Activated CD8-positive, alpha-beta T cell treated with anti-CD3 and anti-CD28 coated beads, Interleukin-2, amount 10 ng/mL, durations not matched to agents 7 days and 5 days (primary cell): ENCODE measurements at regions of chr9 and their contacts with region 1.

Region 1: DNA sequence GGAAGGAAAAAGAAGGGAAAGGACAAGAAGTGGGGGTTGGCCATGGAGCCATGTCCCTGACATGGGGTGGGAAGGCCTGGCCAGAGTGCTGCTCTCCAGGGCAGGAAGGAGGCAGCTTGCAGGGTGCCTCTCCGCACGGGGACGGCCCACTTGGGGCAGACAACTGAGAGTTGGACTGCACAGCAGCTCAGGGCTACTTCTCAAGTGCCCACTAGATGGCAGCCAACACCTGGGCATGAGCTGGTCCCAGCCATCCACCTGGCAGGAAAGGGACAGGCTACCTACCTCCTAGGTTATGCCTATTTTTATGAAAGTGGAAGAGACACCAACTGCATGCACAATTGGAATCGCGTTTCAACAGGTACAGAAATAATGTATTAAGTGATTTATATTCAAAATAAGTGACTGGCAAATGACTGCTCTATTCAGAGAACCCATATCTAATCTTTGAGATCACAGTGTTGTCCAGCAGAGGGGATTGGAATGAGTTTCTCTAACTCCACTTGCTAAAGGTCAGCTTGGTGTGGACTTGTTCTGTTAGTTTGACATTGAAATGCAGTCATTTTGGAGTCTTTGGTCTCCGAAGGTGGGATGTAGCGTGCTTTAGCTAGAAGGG is 113.4 kb downstream of the SYK start:
- DNase-seq: peak; percentile 83
- ATAC-seq: peak; percentile 99
- H3K4me3 Mint-ChIP-seq: no peak overlapping the region
- H3K27ac Mint-ChIP-seq: no peak overlapping the region
- H3K4me1 Mint-ChIP-seq: peaks cover 4% of the 10 kb centered on the region
- H3K27me3 Mint-ChIP-seq: no peaks in the 10 kb centered on the region

Region 2: DNA sequence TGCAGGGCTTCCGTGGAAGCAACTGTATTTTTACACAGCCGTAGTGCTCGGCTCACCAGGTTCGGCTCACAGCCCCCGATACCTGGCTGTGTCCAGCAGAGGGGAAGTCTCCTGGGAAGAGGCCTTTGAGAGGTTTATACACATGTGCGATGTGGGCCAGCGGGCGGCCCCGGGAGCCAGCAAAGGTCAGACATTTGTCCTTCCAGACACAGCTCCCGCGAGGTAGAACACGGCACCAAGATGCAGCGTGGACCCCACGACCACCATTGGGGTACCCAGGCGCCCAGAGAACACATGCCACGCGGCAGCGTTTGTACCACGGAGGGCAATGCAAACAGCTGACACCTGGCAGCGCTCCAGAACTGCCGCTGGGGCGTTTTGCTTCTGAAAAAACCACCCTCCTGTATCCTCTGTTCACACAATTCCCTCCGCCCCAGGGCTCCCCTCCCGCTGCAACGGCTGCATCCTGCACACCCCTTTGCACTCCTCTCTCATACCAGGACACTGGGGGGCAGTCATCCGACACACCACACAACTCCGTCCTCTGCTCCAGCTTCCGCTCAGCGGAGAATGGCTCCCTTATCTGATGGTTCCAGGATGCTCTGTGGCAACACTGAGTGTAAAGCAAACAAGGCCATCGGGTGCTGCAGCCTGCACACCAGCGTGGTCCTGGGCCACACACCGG is 122.0 kb after region 1 on chr9:
- CTCF ChIA-PET with region 1: interaction called, 10 read pairs
- POLR2A ChIA-PET with region 1: no interaction called
- DNase-seq: peak; percentile 87
- ATAC-seq: peak; percentile 96
- H3K4me3 Mint-ChIP-seq: peak overlapping the region; percentile 33
- H3K27ac Mint-ChIP-seq: peak overlapping the region; percentile 74
- H3K4me1 Mint-ChIP-seq: peaks cover 69% of the 10 kb centered on the region
- H3K27me3 Mint-ChIP-seq: peaks cover under 1% of the 10 kb centered on the region

Region 3: DNA sequence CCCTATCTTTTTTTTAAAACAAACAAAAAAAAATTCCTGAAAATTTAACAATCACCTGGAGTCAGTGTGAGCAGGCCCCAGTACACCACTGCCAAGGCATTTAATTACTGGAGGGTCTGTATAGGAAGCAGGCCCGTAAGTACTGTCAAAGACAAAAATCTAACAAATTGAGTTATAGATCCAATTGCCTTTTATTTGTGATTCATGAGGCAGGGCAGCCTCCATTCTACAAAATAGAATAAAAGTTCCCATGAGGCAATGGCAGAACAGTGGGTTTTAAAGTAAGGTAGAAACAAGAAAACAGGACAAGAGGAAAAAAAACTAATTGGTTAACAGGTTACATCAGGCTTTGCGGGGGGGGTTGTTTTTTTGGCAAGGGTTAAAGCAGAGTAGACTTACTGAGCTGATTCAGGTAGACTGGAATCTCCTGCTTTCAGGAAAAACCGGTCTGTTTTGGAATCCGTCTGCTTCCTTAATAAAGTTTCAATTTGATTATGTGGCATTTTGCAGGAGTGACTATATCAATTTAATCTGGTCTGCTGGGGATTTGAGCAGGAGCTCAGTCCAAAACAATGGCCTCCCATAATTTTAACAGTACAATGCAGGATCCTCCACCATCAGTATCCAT is 397.9 kb after region 1 on chr9:
- CTCF ChIA-PET with region 1: no interaction called
- POLR2A ChIA-PET with region 1: no interaction called
- DNase-seq: no peak
- ATAC-seq: no peak
- H3K4me3 Mint-ChIP-seq: no peak overlapping the region
- H3K27ac Mint-ChIP-seq: no peak overlapping the region
- H3K4me1 Mint-ChIP-seq: no peaks in the 10 kb centered on the region
- H3K27me3 Mint-ChIP-seq: no peaks in the 10 kb centered on the region

Region 4: GRCh38 chr9:91433180-91433579 is 518.2 kb after region 1 on chr9:
- CTCF ChIA-PET with region 1: interaction called, 244 read pairs
- POLR2A ChIA-PET with region 1: no interaction called
- DNase-seq: no peak
- ATAC-seq: peak; percentile 75
- H3K4me3 Mint-ChIP-seq: no peak overlapping the region
- H3K27ac Mint-ChIP-seq: no peak overlapping the region
- H3K4me1 Mint-ChIP-seq: peaks cover 9% of the 10 kb centered on the region
- H3K27me3 Mint-ChIP-seq: peaks cover 25% of the 10 kb centered on the region

Region 5: GRCh38 chr9:91727316-91727861 is 812.4 kb after region 1 on chr9:
- CTCF ChIA-PET with region 1: interaction called, 19 read pairs
- POLR2A ChIA-PET with region 1: no interaction called
- DNase-seq: peak; percentile 55
- ATAC-seq: peak; percentile 89
- H3K4me3 Mint-ChIP-seq: no peak overlapping the region
- H3K27ac Mint-ChIP-seq: no peak overlapping the region
- H3K4me1 Mint-ChIP-seq: peaks cover 9% of the 10 kb centered on the region
- H3K27me3 Mint-ChIP-seq: peaks cover 3% of the 10 kb centered on the region